WTC11 (cell line): ENCODE measurements at regions of chr5 and their contacts with region 1.

Region 1: DNA sequence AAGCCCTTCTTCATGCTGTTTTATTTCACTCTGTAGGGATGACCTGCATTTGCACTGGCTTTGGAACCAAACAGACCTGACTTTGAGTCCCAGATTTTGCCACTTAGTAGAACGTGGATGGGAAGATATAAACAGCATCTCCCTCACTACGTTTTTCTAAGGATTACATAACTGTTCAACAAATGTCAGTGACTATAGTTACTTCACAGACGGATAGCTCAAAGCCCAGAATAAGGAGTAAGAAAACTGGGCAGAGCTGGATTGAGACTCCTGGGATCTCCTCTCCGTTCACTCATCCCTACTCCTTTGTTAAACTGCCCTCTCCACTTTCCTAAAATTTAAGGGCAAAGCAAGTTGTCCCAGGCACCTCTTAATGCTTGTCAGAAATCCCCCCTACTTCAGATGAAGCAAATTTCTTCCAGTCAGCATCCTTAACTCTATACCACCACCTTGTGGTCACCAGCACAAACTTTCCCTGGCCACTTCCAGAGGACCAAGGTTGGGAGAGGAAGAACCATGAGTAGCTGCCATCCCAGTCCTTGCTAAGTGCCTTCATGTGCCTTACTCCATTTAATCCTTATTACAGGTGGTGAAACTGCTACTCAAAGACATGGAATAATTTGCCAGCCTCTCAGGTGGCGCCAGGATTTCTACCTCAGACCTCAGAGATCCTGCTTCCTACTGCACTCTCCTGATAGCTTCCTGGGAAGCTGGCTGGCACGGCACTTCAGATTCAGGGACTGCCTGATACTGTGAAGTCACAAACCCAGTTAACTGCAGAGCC is 38.4 kb downstream of the EGR1 start:
- DNase-seq: peak; percentile 27
- ATAC-seq: peak; percentile 84
- H3K4me3 Mint-ChIP-seq: no peak overlapping the region
- H3K27ac Mint-ChIP-seq: peak overlapping the region; percentile 85
- H3K4me1 Mint-ChIP-seq: no peaks in the 10 kb centered on the region
- H3K27me3 Mint-ChIP-seq: no peaks in the 10 kb centered on the region
- CTCF ChIP-seq: peak; percentile 64

Region 2: DNA sequence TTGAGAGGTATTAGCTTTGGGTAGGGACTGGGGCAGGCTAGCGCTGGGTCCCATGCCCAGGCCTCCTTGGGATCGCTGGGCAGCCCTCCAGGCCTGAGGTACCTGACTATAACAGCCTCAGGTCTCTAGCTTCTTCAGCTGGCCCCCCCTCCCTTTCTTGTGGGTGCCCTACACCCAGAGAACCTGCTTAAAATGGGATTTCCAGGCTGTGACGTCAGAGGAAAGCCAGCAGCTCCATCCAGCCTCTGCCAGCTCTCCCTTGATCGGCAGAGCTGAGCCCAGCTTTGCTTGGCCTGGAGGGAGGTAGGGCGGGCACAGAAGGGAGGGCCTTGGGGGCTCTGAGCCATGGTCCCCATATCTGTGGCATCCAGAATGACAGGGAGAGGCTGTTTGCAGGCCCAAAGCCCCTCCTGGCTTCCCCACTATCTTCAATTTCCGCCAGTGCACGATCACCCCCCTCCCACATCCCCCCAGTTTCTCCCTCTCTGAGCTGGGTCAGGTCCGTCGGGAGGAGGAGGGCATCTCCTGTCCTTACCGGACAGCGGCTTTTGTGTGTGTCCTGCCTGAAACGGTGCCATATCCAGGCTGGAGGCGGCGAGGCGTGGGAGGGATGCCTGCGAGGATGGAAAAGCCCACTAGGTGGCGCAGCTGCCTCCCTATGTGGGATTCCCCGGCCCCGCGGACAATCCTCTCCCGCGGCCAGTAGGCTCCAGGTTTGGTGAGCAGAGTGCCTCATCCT is 54.0 kb before region 1 on chr5:
- CTCF ChIA-PET with region 1: interaction called, 254 read pairs
- POLR2A ChIA-PET with region 1: no interaction called
- DNase-seq: peak; percentile 94
- ATAC-seq: peak; percentile 89
- H3K4me3 Mint-ChIP-seq: peak overlapping the region; percentile 51
- H3K27ac Mint-ChIP-seq: no peak overlapping the region
- H3K4me1 Mint-ChIP-seq: peaks cover 16% of the 10 kb centered on the region
- H3K27me3 Mint-ChIP-seq: no peaks in the 10 kb centered on the region; the same call in 1 of the 2 replicates
- CTCF ChIP-seq: peak; percentile 95

Region 3: GRCh38 chr5:138472353-138472752 is 31.3 kb before region 1 on chr5:
- CTCF ChIA-PET with region 1: interaction called, 254 read pairs
- POLR2A ChIA-PET with region 1: interaction called, 28 read pairs
- DNase-seq: peak; percentile 45
- ATAC-seq: peak; percentile 42
- H3K4me3 Mint-ChIP-seq: no peak overlapping the region
- H3K27ac Mint-ChIP-seq: peak overlapping the region; percentile 50; the same call in 1 of the 2 replicates
- H3K4me1 Mint-ChIP-seq: peaks cover 9% of the 10 kb centered on the region
- H3K27me3 Mint-ChIP-seq: peaks cover 20% of the 10 kb centered on the region
- CTCF ChIP-seq: no peak

Region 4: GRCh38 chr5:138528208-138528607 is 24.5 kb after region 1 on chr5:
- CTCF ChIA-PET with region 1: interaction called, 23 read pairs
- POLR2A ChIA-PET with region 1: interaction called, 3 read pairs
- DNase-seq: no peak
- ATAC-seq: no peak
- H3K4me3 Mint-ChIP-seq: no peak overlapping the region
- H3K27ac Mint-ChIP-seq: peak overlapping the region; percentile 43; the same call in 1 of the 2 replicates
- H3K4me1 Mint-ChIP-seq: peaks cover 30% of the 10 kb centered on the region
- H3K27me3 Mint-ChIP-seq: no peaks in the 10 kb centered on the region
- CTCF ChIP-seq: no peak